ENCODE measurements at regions of chr15 and their contacts with region 1.

Region 1: DNA sequence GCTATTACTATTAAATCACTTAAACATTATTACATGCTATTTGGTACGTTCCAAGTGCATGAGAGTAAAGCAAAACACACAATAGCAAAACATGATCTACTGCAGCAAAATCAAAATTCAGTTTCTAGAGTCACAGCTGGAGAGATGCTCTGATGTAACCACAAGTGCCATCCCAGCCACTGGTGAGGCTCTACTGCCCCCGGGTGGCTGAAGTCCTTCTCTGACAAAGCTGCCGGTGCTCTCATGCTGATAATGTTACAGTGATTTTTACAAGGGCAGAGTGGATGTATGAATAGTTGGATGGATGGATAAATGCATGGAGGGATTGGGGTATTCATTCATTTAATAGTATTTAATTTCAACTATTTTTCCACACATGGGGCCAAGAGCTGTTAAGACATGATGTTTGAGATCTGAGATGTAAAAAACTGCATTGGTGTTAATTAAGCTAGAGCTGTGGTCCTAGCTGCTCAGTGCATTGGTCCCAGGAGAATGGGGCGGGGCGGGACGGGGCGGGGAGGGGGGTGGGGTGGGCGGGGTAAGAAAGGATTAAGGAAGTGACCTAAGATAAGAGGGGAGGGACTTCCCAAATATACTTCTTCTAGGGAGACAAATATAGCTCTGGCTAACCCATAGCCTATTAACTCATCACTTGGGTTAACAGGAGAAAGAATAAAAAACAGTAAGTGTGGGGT is 5.3 kb upstream of the SPESP1 start:
- DNase-seq: peak; percentile 86
- H3K4me3 ChIP-seq: peak overlapping the region in 1 of 2 experiments; percentile 24; a peak in 1 of 4 replicates
- H3K27ac ChIP-seq: no peak overlapping the region
- H3K4me1 ChIP-seq: peaks cover 0 to 2% of the 10 kb centered on the region in 2 experiments; a peak in 1 of 4 replicates
- H3K27me3 ChIP-seq: peaks cover 9% of the 10 kb centered on the region; the same call in 1 of the 2 replicates
- CTCF ChIP-seq: peak; percentile 91
- EP300 ChIP-seq: no peak
- RAD21 ChIP-seq: peak; percentile 98

Region 2: GRCh38 chr15:68730471-68730919 is 194.5 kb before region 1 on chr15:
- CTCF ChIA-PET with region 1: interaction called, 13 read pairs
- POLR2A ChIA-PET with region 1: no interaction called
- DNase-seq: peak; percentile 53
- H3K4me3 ChIP-seq: no peak overlapping the region
- H3K27ac ChIP-seq: no peak overlapping the region
- H3K4me1 ChIP-seq: peaks cover 0 to 8% of the 10 kb centered on the region in 2 experiments; a peak in 1 of 4 replicates
- H3K27me3 ChIP-seq: no peaks in the 10 kb centered on the region; the same call in 1 of the 2 replicates
- CTCF ChIP-seq: peak; percentile 60
- EP300 ChIP-seq: no peak
- RAD21 ChIP-seq: peak; percentile 77

Region 3: DNA sequence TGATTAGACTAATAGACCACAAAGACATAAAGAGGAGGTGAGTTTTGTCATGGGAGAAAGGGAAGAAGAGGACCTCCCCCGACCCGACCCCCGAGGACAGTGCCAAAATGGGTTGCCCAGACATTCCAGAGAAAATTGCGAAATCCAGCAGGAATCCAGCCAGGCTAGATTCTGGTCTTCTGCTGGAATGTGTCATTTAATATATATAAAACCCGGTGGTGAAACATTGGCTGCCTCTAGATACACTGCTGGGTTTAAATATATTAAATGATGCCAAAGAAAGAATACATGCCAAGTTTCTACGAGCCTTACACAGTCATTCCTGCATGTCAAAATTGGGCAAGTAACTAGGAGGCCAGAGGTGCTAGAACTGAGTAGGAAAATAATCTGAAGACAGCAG is 39.9 kb before region 1 on chr15:
- CTCF ChIA-PET with region 1: interaction called, 13 read pairs
- POLR2A ChIA-PET with region 1: no interaction called
- DNase-seq: no peak
- H3K4me3 ChIP-seq: no peak overlapping the region
- H3K27ac ChIP-seq: no peak overlapping the region
- H3K4me1 ChIP-seq: no peaks in the 10 kb centered on the region
- H3K27me3 ChIP-seq: no peaks in the 10 kb centered on the region; the same call in 1 of the 2 replicates
- CTCF ChIP-seq: no peak
- EP300 ChIP-seq: no peak
- RAD21 ChIP-seq: no peak

Region 4: DNA sequence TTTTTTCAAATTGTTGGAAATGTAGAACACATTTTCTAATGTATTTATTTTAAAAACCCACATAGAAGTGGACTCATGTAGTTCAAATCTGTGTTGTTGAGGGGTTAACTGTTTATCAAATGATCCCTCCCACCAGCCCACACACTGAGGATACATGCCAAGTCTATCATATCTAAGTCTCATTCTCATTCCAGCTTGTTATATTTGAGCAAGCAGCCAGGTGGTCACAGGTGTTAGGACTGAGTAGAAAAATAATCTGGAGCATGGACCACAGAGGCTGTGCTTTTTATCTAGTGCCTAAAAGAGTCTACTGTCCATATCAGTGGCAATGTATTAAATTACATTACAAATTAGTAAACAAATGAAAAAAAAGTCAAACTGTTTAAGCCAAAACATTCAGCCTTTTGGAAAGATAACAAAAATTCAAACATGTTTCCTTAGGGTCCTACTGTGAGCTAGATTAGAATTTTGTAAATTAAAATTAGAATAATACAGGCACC is 15.4 kb before region 1 on chr15:
- CTCF ChIA-PET with region 1: interaction called, 21 read pairs
- POLR2A ChIA-PET with region 1: no interaction called
- DNase-seq: no peak
- H3K4me3 ChIP-seq: no peak overlapping the region
- H3K27ac ChIP-seq: no peak overlapping the region
- H3K4me1 ChIP-seq: no peaks in the 10 kb centered on the region
- H3K27me3 ChIP-seq: no peaks in the 10 kb centered on the region
- CTCF ChIP-seq: no peak
- EP300 ChIP-seq: no peak
- RAD21 ChIP-seq: no peak

Region 5: DNA sequence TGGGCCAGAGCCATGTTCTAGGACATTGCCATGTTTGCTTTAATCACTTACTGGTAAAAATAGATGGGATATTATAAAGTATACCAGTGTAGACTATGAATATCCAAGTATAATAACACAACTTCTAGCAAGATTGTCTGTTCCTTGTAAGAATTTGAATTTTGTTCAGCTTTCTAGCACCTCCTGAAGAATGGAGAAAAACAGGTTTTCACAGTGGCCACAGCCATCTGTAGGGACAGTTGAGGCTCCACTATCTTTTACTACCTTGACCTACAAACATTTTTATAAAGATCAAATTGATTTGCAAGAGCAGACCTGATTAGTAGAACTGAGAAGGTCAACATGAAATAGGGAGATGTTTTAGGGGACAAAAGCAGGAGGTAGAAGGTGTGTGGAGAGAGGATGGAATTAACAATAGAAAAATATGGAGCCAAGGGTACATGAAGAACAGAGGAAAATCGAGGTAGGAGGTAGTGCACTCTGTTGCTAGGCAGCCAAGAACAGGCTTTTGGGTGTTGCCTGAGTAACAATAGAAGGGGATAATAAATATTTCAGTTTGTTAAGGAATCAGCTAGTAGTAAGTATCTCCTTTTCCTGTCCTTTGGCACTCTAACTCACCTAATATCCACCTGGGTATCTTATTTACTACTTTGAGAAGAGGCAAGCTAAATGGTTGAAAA is 14.3 kb after region 1 on chr15:
- CTCF ChIA-PET with region 1: interaction called, 32 read pairs
- POLR2A ChIA-PET with region 1: no interaction called
- DNase-seq: no peak
- H3K4me3 ChIP-seq: no peak overlapping the region
- H3K27ac ChIP-seq: no peak overlapping the region
- H3K4me1 ChIP-seq: no peaks in the 10 kb centered on the region; a peak in 1 of 4 replicates
- H3K27me3 ChIP-seq: peaks cover 4% of the 10 kb centered on the region; the same call in 1 of the 2 replicates
- CTCF ChIP-seq: no peak
- EP300 ChIP-seq: no peak
- RAD21 ChIP-seq: no peak

Region 6: GRCh38 chr15:69145694-69146492 is 220.9 kb after region 1 on chr15:
- CTCF ChIA-PET with region 1: no interaction called
- POLR2A ChIA-PET with region 1: no interaction called
- DNase-seq: peak; percentile 22
- H3K4me3 ChIP-seq: no peak overlapping the region
- H3K27ac ChIP-seq: no peak overlapping the region
- H3K4me1 ChIP-seq: peaks cover 3 to 9% of the 10 kb centered on the region in 2 experiments; a peak in 1 of 4 replicates
- H3K27me3 ChIP-seq: no peaks in the 10 kb centered on the region
- CTCF ChIP-seq: no peak
- EP300 ChIP-seq: no peak
- RAD21 ChIP-seq: no peak

Measured in SK-N-SH (cell line).